Activated CD4-positive, alpha-beta T cell treated with anti-CD3 and anti-CD28 coated beads, Interleukin-2, amount 10 ng/mL, durations not matched to agents 24 days and 14 days (primary cell): ENCODE measurements at regions of chr1 and their contacts with region 1.

Region 1: DNA sequence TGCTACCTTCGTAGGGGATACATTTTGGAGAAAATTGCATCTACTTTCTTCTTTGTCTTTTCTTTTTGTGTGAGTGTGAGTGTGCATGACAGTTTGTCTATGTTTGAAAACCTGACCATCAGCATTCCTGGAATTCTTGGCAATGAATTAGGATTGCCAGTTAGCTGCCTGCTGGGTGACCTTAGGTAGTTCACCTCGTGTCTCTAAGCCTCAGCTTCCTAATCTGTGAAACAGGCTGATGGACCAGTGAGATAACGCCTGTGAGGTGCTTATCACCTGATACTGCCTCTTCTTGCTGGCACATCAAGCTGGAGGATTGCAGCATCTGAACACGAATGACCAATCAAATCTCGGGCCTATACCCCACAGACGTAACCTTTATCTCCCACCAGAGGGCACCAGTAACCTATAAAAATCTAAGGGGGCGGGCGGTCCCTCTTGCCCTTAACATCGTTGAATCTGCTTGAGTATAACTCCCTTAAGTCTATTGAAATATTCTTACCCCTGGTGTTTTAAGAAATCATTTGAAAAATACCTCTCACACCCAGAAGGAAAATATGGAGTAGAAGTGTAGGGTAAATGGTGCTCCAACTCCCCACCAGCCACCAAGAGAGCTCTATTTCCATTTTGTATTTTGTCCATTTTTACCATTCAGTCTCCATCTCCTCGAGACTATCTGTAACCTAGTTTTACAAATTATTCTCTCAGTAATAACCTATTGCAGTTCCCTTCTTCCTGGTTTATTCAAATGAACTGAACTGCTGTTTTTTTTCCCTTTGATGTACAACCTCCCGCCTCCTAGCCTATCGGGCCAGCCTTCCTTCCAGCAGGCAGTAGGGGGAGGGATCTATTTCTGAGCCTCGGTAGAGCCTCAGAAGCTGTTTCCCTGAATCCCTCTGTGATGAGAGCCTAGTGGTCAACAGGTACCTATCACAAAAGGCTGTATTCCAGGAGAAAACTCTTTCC is 49.7 kb downstream of the MDM4 start:
- DNase-seq: peak; percentile 89
- H3K4me3 Mint-ChIP-seq: no peak overlapping the region
- H3K27ac Mint-ChIP-seq: peak overlapping the region; percentile 80
- H3K4me1 Mint-ChIP-seq: peaks cover 51% of the 10 kb centered on the region
- H3K27me3 Mint-ChIP-seq: no peaks in the 10 kb centered on the region

Region 2: DNA sequence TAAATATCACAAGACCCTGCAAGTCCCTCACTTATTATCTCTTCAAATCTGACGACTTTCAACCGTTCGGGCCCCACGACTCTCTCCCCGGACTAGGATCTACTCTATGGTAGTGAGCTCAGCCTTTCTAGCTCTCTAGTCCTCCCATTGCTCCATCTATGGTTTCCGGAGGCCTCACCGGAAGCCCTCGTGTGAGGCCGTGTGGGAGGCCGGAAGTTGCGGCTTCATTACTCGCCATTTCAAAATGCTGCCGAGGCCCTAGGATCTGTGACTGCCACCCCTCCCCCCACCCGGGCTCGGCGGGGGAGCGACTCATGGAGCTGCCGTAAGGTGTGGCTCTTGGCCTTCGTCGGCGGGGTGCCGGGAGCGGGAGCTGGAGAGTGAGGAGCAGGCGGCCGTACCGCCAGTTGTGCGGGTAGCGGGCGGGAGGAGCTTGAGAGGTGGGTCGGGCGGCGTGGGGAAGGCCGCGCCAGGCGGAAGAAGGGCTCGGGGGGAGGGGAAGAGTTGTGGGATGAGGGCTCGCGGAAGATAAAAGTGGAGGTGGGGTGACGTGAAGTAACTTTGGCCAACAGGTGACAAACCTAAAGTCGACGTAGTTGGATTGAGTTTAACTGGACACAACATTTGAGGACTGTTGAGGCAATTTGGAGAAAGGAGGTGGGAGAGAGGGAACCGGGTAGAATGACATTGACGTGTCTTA is 49.6 kb before region 1 on chr1 and contains the start of gene MDM4:
- intact Hi-C with region 1: loop called (anchors 5 kb)
- DNase-seq: peak; percentile 97
- H3K4me3 Mint-ChIP-seq: no peak within 1 kb of the TSS
- H3K27ac Mint-ChIP-seq: no peak within 1 kb of the TSS
- H3K4me1 Mint-ChIP-seq: peaks cover 33% of the 10 kb centered on the region
- H3K27me3 Mint-ChIP-seq: no peaks in the 10 kb centered on the region
- total RNA-seq, gene MDM4: 81.5 and 85.5 TPM in 2 replicates

Region 3: GRCh38 chr1:204544321-204544720 is 21.6 kb before region 1 on chr1:
- intact Hi-C with region 1: loop called (anchors 2 kb)
- DNase-seq: peak; percentile 76
- H3K4me3 Mint-ChIP-seq: peak overlapping the region; percentile 55
- H3K27ac Mint-ChIP-seq: peak overlapping the region; percentile 68
- H3K4me1 Mint-ChIP-seq: peaks cover 53% of the 10 kb centered on the region
- H3K27me3 Mint-ChIP-seq: no peaks in the 10 kb centered on the region

Region 4: DNA sequence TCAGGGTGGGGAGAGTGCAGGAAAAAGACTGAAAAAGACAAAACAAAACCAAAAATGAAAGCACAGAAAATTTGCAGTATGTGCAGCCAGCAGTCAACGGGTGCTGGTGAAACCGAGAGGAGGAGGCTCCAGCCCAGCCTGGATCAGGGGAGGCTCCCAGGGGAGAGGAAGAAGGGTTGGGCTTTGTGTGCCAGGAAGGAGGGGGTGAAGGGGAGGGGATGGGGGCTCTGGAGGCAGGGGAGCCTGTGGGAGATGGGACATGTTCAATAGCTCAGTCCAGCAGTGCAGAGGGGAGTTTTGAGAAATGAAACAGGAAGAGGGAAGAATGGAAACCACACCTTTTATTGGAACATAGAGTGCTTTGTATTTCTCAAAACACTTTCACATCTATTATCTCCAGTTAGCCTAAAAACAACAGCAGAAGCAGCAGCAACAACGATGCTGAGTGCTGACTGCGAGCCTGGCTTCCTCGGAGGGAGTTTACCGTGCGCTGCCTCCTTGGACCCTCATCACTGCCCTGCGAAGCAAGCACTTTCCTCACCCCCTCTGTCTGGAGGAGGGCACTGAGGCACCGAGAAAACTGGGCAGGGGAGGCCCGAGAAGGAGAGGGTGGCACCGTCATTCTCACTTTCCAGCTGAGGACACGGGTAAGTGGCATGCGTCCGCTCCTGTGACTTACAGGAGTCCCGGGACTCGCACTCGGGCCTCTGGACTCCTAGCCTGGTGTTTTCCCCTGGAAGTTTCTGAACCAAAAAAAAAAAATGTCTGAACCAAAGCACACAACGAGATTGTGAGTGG is 13.2 kb after region 1 on chr1:
- intact Hi-C with region 1: loop called (anchors 1 kb)
- DNase-seq: peak; percentile 89
- H3K4me3 Mint-ChIP-seq: peak overlapping the region; percentile 91
- H3K27ac Mint-ChIP-seq: peak overlapping the region; percentile 98
- H3K4me1 Mint-ChIP-seq: peaks cover 32% of the 10 kb centered on the region
- H3K27me3 Mint-ChIP-seq: no peaks in the 10 kb centered on the region

Region 5: DNA sequence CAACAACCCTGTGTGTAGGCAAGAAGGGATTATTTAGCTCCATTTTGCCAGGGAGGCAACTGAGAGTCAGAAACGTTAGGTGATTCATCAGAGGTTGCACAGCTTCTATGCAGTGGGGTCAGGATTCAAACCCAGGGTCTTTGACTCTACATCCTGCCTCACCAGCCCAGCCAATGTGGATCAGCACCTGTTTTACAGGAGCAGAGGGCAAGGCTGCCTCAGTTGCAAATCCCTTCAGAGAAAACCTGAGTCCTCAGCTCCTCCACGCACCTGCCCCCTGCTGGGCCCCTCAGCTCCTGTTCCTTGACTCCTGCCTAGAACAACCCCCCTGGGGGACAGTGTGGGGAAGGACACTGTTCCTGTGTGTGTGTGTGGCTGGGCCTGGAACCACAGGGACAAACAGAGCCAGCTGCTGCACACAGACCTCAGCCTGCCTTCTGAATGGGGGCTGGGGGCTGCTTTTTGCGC is 58.0 kb after region 1 on chr1:
- intact Hi-C with region 1: loop called (anchors 10 kb)
- DNase-seq: peak; percentile 69
- H3K4me3 Mint-ChIP-seq: no peak overlapping the region
- H3K27ac Mint-ChIP-seq: no peak overlapping the region
- H3K4me1 Mint-ChIP-seq: no peaks in the 10 kb centered on the region
- H3K27me3 Mint-ChIP-seq: peaks cover 1% of the 10 kb centered on the region

Region 6: GRCh38 chr1:204763706-204764427 is 198.0 kb after region 1 on chr1:
- intact Hi-C with region 1: loop called (anchors 1 kb)
- DNase-seq: peak; percentile 93
- H3K4me3 Mint-ChIP-seq: peak overlapping the region; percentile 63
- H3K27ac Mint-ChIP-seq: no peak overlapping the region
- H3K4me1 Mint-ChIP-seq: peaks cover 9% of the 10 kb centered on the region
- H3K27me3 Mint-ChIP-seq: peaks cover 40% of the 10 kb centered on the region

Region 7: DNA sequence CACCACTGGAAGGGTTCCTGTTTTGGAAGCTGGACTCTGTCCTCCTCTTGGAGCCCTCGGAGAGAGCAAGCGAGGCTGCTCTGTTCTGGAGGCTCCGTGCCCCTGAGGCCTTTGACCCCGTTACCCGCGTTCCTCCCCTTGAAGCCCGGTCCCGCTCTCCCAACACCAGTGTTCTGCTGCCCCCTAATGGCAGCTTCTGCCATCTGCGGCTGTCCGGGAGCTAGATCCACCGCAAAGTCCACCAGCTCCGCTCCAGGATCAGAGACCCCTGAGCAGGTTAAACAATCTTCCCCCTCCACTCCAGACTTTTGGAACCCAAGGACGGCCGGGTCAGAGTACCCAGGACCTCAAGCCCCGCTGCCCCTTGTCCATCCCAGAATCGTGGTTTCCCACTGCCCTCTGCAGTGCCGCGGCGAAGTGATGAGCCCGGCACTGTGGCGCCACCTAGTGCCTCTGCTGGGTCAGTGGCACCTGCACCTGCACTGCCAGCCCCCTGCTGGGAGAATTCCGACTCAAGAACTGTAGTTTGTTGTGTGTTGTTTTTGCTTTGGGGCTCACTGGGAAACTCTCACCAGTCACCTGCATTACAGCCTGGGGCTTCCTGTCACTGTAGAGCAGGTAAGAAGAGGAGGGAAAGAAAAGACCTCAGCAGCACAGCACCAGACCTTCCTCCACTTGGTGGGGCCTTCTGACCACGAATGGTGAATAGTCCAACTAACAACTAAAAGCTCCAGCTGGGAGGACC is 241.2 kb after region 1 on chr1:
- intact Hi-C with region 1: loop called (anchors 1 kb)
- DNase-seq: peak; percentile 95
- H3K4me3 Mint-ChIP-seq: peak overlapping the region; percentile 89
- H3K27ac Mint-ChIP-seq: peak overlapping the region; percentile 61
- H3K4me1 Mint-ChIP-seq: peaks cover 6% of the 10 kb centered on the region
- H3K27me3 Mint-ChIP-seq: peaks cover 16% of the 10 kb centered on the region